Right ventricle myocardium superior (tissue), 1 donor: ENCODE measurements at regions of chr1 and their contacts with region 1.

Region 1: DNA sequence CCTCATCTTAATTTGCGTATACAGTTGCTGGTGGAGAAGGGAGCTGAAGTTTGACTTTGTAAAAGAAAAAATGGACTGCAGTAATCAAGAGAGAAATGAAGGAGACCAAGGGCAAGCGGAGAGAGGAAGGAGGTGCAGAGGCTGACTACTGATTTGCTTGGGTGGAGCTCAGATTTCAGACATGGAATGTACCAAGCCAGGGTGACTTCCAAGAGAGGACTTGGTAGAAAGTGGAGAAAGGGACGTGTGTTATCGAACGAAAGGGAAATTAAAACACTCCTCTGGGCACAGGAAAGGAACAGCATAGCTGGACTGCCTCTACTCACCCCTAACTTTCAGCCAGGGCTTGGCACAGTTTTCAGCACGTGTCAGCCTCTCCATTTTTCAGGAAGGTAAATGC is 15.1 kb upstream of the HEATR1 start:
- DNase-seq: no peak
- ATAC-seq: peak; percentile 62

Region 2: GRCh38 chr1:236345728-236346127 is 273.7 kb before region 1 on chr1:
- intact Hi-C with region 1: no loop called
- DNase-seq: no peak
- ATAC-seq: no peak

Region 3: DNA sequence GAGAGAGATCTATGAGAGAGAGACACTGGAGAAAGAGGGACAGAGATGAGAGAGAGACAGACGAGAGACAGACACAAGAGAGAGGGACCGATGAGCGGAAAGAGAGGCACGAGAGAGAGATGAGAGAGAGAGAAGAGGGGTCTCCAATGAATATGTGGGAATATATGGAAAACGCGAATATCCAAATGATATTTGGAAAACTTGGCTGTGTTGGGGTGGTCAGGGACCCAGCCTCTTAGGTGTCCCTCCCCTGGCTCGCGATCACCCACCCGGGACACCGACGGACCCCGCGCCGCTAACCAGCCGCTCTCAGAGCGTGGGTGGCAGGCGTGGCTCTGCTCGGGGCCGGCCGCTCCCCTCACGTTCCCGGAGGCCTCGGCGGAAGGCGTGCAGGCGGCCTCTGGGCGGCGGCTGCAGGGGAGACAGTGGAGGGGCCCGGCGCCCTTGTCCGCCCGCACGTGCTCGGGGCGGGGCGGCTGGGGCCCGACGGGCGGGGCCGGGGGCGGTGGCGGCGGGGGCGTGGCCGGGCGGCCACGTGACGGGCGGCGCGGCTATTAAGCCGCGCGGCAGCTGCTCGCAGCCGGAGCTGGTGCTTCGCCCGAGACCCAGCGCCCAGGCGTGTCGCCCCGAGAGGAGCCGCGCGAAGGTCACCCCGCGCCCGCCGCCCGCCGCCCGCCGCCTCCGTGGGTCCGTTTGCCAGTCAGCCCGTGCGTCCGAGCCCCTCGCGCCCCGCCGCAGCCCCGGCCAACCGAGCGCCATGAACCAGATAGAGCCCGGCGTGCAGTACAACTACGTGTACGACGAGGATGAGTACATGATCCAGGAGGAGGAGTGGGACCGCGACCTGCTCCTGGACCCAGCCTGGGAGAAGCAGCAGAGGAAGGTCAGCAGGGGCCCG is 66.8 kb after region 1 on chr1 and contains the start of gene ACTN2:
- intact Hi-C with region 1: loop called (anchors 10 kb)
- DNase-seq: peak; percentile 80
- ATAC-seq: peak; percentile 66
- total RNA-seq, gene ACTN2: 1,943 TPM